ENCODE measurements at regions of chr6 and their contacts with region 1.

Region 1: DNA sequence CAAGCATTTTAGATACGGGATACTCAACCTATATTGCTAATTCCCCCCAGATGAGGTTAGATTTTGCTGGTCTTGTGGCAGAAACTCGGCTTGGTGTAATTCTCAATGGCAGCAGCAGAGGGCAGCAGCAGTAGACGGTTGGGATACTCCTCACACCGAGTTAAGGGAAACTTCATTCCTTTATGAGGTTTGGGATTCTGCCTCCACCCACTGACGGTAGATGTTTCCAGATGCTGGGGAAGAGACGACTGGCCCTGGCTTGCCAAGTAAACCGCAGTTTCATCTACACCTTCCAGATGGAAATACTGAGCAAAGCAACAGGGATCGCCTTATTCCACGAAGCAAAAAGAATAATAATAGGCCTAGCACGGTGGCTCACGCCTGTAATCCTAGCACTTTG is 8.2 kb upstream of the TBC1D7 start:
- H3K4me3 Mint-ChIP-seq: no peak overlapping the region
- H3K27ac Mint-ChIP-seq: no peak overlapping the region
- H3K4me1 Mint-ChIP-seq: peaks cover 34% of the 10 kb centered on the region
- H3K27me3 Mint-ChIP-seq: no peaks in the 10 kb centered on the region

Region 2: GRCh38 chr6:13538084-13538483 is 201.5 kb after region 1 on chr6:
- intact Hi-C with region 1: loop called (anchors 1 kb)
- H3K4me3 Mint-ChIP-seq: no peak overlapping the region
- H3K27ac Mint-ChIP-seq: no peak overlapping the region
- H3K4me1 Mint-ChIP-seq: no peaks in the 10 kb centered on the region
- H3K27me3 Mint-ChIP-seq: peaks cover 3% of the 10 kb centered on the region

Region 3: DNA sequence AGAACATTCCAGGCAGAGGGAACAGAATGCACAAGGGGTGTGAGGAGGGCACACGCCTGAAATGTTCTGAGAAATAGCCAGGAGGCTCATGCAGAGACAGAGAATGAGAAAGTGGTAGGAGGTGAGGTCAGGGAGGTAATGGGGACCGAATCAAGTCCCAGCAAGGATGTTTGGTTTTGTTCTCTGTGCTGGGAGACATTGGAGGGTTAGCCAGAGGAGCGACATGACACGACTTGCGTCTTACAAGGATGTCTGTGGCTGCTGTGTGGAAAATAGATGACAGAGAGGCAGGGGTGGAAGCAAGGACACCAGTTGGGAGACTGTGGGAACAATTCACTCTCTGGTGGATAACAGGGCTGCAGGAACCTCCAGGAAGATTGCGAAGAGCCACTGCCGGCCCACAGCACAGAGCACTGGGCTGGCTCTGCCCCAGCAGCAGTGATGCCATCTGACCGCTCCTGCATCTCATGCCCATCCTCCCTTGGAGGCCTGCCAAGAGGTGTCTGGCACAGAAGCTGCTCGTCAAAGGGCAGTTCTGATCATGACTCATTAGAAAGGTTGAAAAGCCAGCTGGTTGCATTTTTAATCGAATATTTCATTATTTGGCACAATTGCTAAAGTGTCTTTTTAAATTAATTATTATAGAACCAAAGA is 723.4 kb after region 1 on chr6:
- intact Hi-C with region 1: loop called (anchors 5 kb)
- H3K4me3 Mint-ChIP-seq: no peak overlapping the region
- H3K27ac Mint-ChIP-seq: no peak overlapping the region
- H3K4me1 Mint-ChIP-seq: no peaks in the 10 kb centered on the region
- H3K27me3 Mint-ChIP-seq: peaks cover 43% of the 10 kb centered on the region

Measured in dendritic cell treated with granulocyte-macrophage colony-stimulating factor and Interleukin-4, amounts not matched to agents 40 ng/mL and 50 ng/mL, for 4 days (primary cell).